A549 (cell line): ENCODE measurements at regions of chr4 and their contacts with region 1.

Region 1: DNA sequence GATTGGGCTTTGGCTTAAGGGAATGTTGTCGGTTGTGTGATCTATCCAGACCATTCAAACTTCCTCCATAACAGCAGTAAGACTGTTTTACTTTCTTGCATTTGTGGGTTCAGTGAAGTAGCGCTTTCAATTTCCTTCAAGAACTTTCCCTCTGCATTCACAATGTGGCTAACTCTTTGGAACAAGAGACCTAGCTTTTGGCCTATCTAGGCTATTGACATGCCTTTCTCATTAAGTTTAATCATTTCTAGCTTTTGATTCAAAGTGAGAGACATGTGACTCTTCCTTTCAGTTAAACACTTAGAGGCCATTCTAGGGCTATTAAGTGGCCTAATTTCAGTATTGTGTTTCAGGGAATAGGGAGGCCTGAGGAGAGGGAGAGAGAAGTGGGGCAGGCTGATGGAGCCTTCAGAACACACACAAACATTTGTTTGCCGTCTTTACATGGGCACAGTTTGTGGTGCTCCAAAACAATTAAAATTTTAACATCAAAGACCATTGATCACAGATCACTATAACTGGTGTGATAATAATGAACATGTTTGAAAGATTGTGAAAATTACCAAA is 34.1 kb downstream of the ADH5 start:
- DNase-seq: no peak
- ATAC-seq: no peak
- H3K4me3 ChIP-seq: no peak overlapping the region
- H3K27ac ChIP-seq: no peak overlapping the region
- H3K4me1 ChIP-seq: peaks cover 16% of the 10 kb centered on the region
- CTCF ChIP-seq: no peak
- EP300 ChIP-seq: no peak
- POLR2A ChIP-seq: no peak
- RAD21 ChIP-seq: no peak

Region 2: GRCh38 chr4:98995183-98996055 is 59.1 kb before region 1 on chr4 and contains the start of gene METAP1:
- CTCF ChIA-PET with region 1: interaction called, 79 read pairs
- POLR2A ChIA-PET with region 1: interaction called, 32 read pairs
- DNase-seq: peak; percentile 82 to 95
- ATAC-seq: peak; percentile 96
- H3K4me3 ChIP-seq: peak within 1 kb of the TSS; percentile 91
- H3K27ac ChIP-seq: peak within 1 kb of the TSS; percentile 93 to 99
- H3K4me1 ChIP-seq: peaks cover 25% of the 10 kb centered on the region; the same call in 2 of the 3 replicates
- CTCF ChIP-seq: peak; percentile 82
- EP300 ChIP-seq: no peak
- POLR2A ChIP-seq: peak; percentile 88
- RAD21 ChIP-seq: peak; percentile 73 to 89
- polyA plus RNA-seq, gene METAP1: 76.8 and 106 TPM in 2 replicates

Region 3: GRCh38 chr4:99024481-99025275 is 29.8 kb before region 1 on chr4:
- CTCF ChIA-PET with region 1: interaction called, 19 read pairs
- POLR2A ChIA-PET with region 1: no interaction called
- DNase-seq: peak in 1 of 2 experiments; percentile 11
- ATAC-seq: peak; percentile 78 to 88
- H3K4me3 ChIP-seq: no peak overlapping the region
- H3K27ac ChIP-seq: peak overlapping the region; percentile 39 to 78; a peak in 4 of 6 replicates
- H3K4me1 ChIP-seq: peaks cover 58% of the 10 kb centered on the region
- CTCF ChIP-seq: peak; percentile 15; the same call in 1 of the 3 replicates
- EP300 ChIP-seq: no peak
- POLR2A ChIP-seq: no peak
- RAD21 ChIP-seq: no peak

Region 4: GRCh38 chr4:99088481-99089365 is 34.2 kb after region 1 on chr4 and contains the start of gene ADH5:
- CTCF ChIA-PET with region 1: interaction called, 3 read pairs
- POLR2A ChIA-PET with region 1: interaction called, 11 read pairs
- DNase-seq: peak; percentile 74 to 81
- ATAC-seq: peak; percentile 96
- H3K4me3 ChIP-seq: peak within 1 kb of the TSS; percentile 95
- H3K27ac ChIP-seq: peak within 1 kb of the TSS; percentile 93 to 99
- H3K4me1 ChIP-seq: peaks cover 16% of the 10 kb centered on the region
- CTCF ChIP-seq: no peak
- EP300 ChIP-seq: no peak
- POLR2A ChIP-seq: peak; percentile 91
- RAD21 ChIP-seq: no peak
- polyA plus RNA-seq, gene ADH5: 134 and 152 TPM in 2 replicates

Region 5: DNA sequence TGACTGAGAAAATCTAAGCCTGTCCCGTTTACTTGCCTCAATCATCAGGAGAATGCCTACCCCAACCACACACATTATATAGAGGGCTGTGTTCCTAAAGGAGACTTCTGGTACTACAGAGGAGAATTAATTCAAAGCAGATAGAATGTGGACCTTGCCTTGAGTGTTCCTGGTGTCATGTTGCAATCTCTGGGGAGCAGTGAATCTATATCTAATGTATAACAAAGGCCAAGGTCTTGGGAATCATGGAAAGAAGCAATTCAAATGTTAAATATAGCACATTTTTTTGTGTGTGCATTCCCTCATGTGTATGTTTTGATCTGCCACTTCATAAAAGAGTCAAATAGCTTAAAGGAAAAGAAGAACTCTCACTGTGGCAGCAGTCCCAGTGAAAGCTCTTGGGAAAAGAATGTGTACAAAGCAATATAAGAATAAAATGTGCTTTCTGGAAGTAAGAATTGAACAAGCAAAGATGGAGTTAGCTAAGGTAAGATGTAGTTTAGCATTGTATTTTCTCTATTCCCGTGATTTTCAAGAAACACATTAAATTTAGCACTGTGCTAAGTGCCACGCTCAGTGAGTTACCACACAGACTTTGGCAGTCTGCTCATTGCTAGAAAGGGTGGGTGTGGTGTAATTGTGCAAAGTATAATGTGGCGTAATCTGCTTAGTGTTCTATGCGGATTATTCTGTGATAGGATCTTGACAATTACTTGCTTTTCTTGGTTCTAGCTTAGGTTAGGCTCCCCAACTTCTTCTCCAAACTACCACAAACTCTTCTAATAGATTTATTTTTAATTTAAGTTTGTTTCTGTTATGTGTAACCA is 150.9 kb after region 1 on chr4:
- CTCF ChIA-PET with region 1: no interaction called
- POLR2A ChIA-PET with region 1: no interaction called
- DNase-seq: no peak
- ATAC-seq: no peak
- H3K4me3 ChIP-seq: no peak overlapping the region
- H3K27ac ChIP-seq: no peak overlapping the region
- H3K4me1 ChIP-seq: no peaks in the 10 kb centered on the region
- CTCF ChIP-seq: no peak
- EP300 ChIP-seq: no peak
- POLR2A ChIP-seq: no peak
- RAD21 ChIP-seq: no peak

Region 6: DNA sequence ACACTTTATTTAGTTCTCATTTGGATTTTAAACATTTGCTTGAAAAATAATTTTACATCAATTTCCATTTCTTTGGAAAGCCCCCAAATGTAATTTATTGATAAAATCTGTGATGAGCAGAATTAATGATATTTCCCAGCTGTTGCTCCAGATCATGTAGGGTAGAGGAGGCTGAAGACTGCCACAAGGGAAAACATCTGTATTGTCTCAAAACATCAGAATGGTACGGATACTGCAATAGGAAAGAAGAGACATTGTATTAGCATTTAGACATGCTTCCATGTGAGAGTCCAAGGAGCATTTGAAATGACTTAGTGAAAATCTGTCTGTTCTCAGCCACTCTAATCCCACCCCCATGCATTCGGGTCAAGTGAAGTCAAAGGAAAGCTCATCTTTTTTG is 221.9 kb after region 1 on chr4:
- CTCF ChIA-PET with region 1: no interaction called
- POLR2A ChIA-PET with region 1: no interaction called
- DNase-seq: no peak
- ATAC-seq: no peak
- H3K4me3 ChIP-seq: no peak overlapping the region
- H3K27ac ChIP-seq: no peak overlapping the region
- H3K4me1 ChIP-seq: no peaks in the 10 kb centered on the region
- CTCF ChIP-seq: no peak
- EP300 ChIP-seq: no peak
- POLR2A ChIP-seq: no peak
- RAD21 ChIP-seq: no peak